Heart right ventricle (tissue), 16 donors: ENCODE measurements at regions of chr13 and their contacts with region 1.

Region 1: GRCh38 chr13:46530084-46530935 is 22.7 kb upstream of the LRCH1 start:
- DNase-seq: no peak
- ATAC-seq: peak in 7 of 8 donors; percentile 53 to 80 (median 75)
- H3K4me3 ChIP-seq: no peak overlapping the region
- H3K27ac ChIP-seq: peak overlapping the region in 7 of 10 donors; percentile 28 to 65 (median 49)
- H3K4me1 ChIP-seq: peaks cover 0 to 20% (median 12%) of the 10 kb centered on the region in 9 donors
- H3K27me3 ChIP-seq: peaks cover 0 to 3% (median 0%) of the 10 kb centered on the region in 7 donors
- CTCF ChIP-seq: no peak

Region 2: GRCh38 chr13:46168341-46168740 is 362.0 kb before region 1 on chr13:
- intact Hi-C with region 1: no loop called
- DNase-seq: no peak
- ATAC-seq: peak in 4 of 8 donors; percentile 41 to 68 (median 62)
- H3K4me3 ChIP-seq: peak overlapping the region in 1 of 10 donors; percentile 14
- H3K27ac ChIP-seq: peak overlapping the region in 1 of 10 donors; percentile 49
- H3K4me1 ChIP-seq: peaks cover 0 to 97% (median 12%) of the 10 kb centered on the region in 9 donors
- H3K27me3 ChIP-seq: peaks cover 0 to 7% (median 0%) of the 10 kb centered on the region in 7 donors
- CTCF ChIP-seq: no peak

Region 3: DNA sequence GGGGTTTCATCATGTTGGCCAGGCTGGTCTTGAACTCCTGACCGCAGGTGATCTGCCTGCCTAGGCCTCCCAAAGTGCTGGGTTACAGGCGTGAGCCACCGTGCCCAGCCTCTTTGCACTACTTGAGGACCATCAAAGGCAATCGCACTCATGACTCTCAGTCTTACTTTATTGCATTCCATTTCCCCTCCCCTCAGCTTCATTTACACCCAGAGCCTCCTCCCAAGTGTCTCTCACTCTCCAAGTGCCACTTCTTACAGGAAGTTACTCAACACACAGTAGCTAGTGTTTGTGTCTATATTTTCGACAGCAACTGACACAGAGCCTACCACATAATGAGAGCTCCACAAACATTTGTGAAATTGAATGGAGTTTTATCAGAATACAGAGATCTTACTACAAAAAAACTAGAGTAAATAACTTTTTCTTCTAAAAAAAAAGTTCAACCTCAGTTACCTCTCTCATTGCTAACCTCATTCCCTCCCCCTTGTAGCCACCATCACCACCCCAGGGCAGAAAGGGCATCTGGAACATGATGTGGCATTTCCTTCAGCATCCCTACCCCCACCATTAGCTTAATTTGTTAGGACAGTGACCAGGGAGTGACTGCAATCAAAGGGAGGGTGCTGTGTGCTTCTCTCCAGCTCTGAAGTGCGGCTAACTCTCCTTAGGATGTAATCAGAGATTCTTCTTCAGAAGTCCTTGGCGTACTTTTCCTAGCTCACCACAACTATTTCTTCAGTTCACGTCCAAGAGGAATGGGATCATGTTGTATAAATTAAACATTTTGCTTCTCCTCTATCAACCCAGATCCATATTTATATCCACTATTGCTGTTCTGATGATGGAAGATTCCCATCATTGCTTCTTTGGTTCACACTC is 126.2 kb before region 1 on chr13:
- intact Hi-C with region 1: no loop called
- DNase-seq: no peak
- ATAC-seq: peak in 6 of 8 donors; percentile 28 to 75 (median 70)
- H3K4me3 ChIP-seq: no peak overlapping the region
- H3K27ac ChIP-seq: peak overlapping the region in 2 of 10 donors; percentile 34 to 89
- H3K4me1 ChIP-seq: peaks cover 0 to 48% (median 0%) of the 10 kb centered on the region in 9 donors
- H3K27me3 ChIP-seq: peaks cover 0 to 6% (median 0%) of the 10 kb centered on the region in 7 donors
- CTCF ChIP-seq: no peak

Region 4: GRCh38 chr13:46510001-46510400 is 20.3 kb before region 1 on chr13:
- intact Hi-C with region 1: loop called in 1 of 10 experiments (anchors 2 kb)
- DNase-seq: no peak
- ATAC-seq: no peak
- H3K4me3 ChIP-seq: no peak overlapping the region
- H3K27ac ChIP-seq: no peak overlapping the region
- H3K4me1 ChIP-seq: peaks cover 0 to 3% (median 0%) of the 10 kb centered on the region in 9 donors
- H3K27me3 ChIP-seq: peaks cover 0 to 21% (median 0%) of the 10 kb centered on the region in 7 donors
- CTCF ChIP-seq: no peak